Left colon (tissue), 2 donors: ENCODE measurements at regions of chr13 and their contacts with region 1.

Region 1: DNA sequence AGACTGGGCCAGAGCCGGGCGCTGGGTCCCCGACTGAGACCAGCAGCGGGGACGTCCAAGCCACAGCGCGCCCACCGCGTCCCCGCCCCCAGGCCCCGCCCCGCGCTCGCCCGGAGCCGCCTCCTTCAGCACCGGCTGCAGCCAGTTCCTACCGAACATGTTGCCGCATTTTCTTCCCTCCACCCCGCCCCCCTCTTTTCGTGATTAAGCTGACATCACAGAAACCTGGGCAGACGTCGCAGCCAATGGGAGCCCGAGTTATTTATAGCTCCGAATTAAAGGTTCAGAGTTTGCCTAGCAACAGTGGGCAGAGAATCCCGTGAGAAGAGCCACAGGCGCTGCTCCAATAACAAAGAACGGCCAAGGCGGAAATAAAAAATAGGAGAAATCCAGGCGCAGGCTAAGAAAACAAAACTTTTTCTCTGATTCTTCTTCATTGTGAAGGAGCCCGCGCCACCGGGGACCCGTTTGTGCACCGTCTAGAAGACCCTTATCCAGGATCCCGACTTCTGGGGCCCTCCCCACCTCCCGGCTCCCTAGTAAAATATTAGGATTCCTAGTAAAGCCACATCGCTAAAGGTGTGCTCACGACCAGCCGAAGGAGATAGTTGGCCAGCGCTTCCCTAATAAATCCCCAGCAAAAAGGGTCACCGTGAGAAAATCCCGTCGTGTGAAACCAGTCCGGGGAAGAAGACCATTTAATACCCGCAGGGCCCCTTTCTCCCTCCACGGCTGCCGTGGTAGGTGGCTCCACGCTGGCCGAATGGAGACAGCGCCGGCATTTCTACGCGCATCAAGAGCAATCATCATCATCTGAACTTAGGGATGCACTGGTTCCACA is 61.7 kb downstream of the SERP2 start:
- DNase-seq: peak; percentile 97 to 98
- ATAC-seq: peak; percentile 75

Region 2: DNA sequence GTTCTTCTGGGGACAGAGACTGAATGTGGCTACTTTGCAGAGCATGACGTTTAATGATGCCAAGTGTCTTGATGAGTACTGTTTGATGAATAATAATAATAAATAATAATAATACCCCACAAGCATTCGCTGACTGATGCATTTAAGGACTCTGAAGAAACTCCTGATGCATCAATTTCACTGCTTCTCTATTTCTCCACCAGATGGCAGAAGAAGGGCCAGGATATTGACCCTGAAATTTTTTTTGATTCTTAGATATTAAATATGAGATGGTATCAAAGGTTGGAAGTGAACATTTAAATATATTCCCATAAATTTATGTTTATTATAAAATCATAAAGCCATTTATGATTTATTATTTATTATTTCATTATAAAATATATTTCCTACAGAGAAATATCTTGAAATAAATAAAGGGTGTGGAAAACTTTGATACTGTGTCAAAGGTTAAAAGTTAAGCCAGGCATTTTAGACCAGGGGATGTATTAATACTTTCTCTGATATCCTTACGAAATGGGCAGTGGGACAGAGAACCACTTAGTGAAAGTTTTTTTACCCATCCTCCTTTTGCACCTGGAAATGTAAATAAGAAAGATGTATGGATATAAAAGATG is 384.8 kb before region 1 on chr13:
- intact Hi-C with region 1: loop called in 1 of 2 experiments (anchors 5 kb)
- DNase-seq: no peak
- ATAC-seq: peak; percentile 51

Region 3: DNA sequence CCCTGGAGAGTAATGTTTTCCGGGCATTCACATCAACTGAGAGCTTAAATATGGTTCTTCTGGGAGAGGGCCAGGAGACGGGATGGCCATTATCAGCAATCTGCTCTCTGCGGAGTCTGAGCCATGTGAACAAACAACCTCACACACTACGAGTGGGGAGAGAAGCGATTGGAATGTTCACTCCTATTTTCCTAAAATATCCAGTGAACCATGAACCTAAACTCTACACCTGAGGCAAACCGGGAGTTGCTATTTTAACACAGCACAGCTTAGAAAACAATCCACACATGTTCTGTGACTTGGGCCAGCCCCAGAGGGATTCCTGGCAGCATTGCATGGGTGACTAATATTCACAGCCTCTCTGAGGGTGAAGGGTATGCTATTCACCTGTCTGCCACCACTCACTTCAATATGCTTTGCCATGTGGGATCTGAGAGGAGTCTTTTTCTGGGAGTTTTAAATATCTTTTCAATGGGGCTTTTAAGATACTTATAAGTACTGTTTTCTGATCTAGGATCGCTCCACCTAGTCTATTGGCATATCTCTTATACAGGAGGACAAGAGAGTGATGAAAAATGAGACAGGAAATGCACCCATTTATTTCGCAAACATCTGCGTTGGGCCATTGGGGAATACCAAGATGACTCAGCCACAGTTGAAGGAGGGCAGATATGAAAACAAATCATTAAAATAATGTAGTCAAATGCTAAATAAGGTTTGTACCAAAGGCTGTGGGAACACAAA is 134.3 kb before region 1 on chr13:
- intact Hi-C with region 1: loop called in 1 of 2 experiments (anchors 10 kb)
- DNase-seq: no peak
- ATAC-seq: no peak

Region 4: DNA sequence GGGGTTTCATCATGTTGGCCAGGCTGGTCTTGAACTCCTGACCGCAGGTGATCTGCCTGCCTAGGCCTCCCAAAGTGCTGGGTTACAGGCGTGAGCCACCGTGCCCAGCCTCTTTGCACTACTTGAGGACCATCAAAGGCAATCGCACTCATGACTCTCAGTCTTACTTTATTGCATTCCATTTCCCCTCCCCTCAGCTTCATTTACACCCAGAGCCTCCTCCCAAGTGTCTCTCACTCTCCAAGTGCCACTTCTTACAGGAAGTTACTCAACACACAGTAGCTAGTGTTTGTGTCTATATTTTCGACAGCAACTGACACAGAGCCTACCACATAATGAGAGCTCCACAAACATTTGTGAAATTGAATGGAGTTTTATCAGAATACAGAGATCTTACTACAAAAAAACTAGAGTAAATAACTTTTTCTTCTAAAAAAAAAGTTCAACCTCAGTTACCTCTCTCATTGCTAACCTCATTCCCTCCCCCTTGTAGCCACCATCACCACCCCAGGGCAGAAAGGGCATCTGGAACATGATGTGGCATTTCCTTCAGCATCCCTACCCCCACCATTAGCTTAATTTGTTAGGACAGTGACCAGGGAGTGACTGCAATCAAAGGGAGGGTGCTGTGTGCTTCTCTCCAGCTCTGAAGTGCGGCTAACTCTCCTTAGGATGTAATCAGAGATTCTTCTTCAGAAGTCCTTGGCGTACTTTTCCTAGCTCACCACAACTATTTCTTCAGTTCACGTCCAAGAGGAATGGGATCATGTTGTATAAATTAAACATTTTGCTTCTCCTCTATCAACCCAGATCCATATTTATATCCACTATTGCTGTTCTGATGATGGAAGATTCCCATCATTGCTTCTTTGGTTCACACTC is 1968.7 kb after region 1 on chr13:
- intact Hi-C with region 1: no loop called
- DNase-seq: no peak
- ATAC-seq: no peak